Ovary (tissue), 10 donors: ENCODE measurements at regions of chr20 and their contacts with region 1.

Region 1: GRCh38 chr20:48188657-48189551 is 403.6 kb upstream of the SULF2 start:
- DNase-seq: peak in 1 of 5 donors; percentile 49
- H3K4me3 ChIP-seq: no peak overlapping the region
- H3K27ac ChIP-seq: no peak overlapping the region
- H3K4me1 ChIP-seq: no peaks in the 10 kb centered on the region
- H3K27me3 ChIP-seq: no peaks in the 10 kb centered on the region
- CTCF ChIP-seq: peak in 2 of 3 donors; percentile 21 to 29
- EP300 ChIP-seq: no peak
- POLR2A ChIP-seq: no peak

Region 2: GRCh38 chr20:47713878-47714450 is 474.9 kb before region 1 on chr20:
- intact Hi-C with region 1: loop called in 1 of 4 experiments (anchors 5 kb)
- DNase-seq: peak; percentile 50 to 71 (median 70)
- H3K4me3 ChIP-seq: peak overlapping the region; percentile 11
- H3K27ac ChIP-seq: peak overlapping the region in 1 of 2 donors; percentile 55
- H3K4me1 ChIP-seq: peaks cover 29% of the 10 kb centered on the region
- H3K27me3 ChIP-seq: no peaks in the 10 kb centered on the region
- CTCF ChIP-seq: no peak
- EP300 ChIP-seq: no peak
- POLR2A ChIP-seq: no peak